Gastrocnemius medialis (tissue), 4 donors: ENCODE measurements at regions of chr4 and their contacts with region 1.

Region 1: DNA sequence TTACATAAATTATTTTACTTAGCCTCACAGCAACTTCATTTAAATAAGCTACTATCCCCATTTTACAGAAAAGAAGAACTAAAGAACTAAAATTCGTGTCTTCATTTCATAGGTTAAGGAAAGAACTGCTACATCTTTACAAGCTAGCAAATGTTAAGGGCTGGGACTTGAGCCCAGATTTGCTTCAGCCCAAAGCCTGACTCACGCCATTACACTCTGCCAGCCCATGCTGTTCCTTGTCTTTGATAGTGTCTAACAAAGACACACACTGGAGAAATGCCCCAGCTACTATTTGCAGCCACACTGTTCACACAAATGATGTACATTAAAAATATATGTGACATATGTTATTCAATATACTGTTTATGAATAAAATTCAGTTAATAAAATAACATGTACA is 29.0 kb upstream of the ERVMER34-1 start:
- DNase-seq: no peak
- ATAC-seq: no peak
- H3K4me3 ChIP-seq: no peak overlapping the region
- H3K27ac ChIP-seq: no peak overlapping the region
- H3K4me1 ChIP-seq: no peaks in the 10 kb centered on the region
- H3K27me3 ChIP-seq: no peaks in the 10 kb centered on the region
- CTCF ChIP-seq: no peak
- POLR2A ChIP-seq: no peak

Region 2: DNA sequence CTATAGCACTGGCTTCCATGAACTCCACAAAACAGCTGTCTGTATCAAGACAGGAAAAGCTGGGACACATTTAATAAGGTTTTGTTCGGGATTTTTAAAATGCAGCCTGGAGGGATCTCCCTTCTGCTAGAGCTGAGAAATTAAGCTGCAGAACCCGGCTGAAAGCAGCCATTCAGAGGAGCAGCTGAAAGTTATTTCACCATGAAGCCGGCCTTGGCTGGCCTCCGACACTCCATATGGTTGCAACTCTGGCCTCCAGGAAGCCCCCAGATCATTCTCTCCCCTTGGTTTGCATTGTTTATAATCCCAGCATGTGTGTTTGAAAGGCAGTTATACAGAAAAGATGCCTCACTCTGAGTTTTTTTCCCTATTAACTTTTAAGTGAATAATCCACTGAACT is 489.7 kb before region 1 on chr4:
- in situ Hi-C with region 1: no loop called
- intact Hi-C with region 1: no loop called
- DNase-seq: no peak
- ATAC-seq: no peak
- H3K4me3 ChIP-seq: no peak overlapping the region
- H3K27ac ChIP-seq: no peak overlapping the region
- H3K4me1 ChIP-seq: no peaks in the 10 kb centered on the region
- H3K27me3 ChIP-seq: no peaks in the 10 kb centered on the region
- CTCF ChIP-seq: no peak
- POLR2A ChIP-seq: no peak

Region 3: GRCh38 chr4:52743444-52744019 is 36.7 kb before region 1 on chr4:
- in situ Hi-C with region 1: no loop called
- intact Hi-C with region 1: no loop called
- DNase-seq: no peak
- ATAC-seq: no peak
- H3K4me3 ChIP-seq: no peak overlapping the region
- H3K27ac ChIP-seq: no peak overlapping the region
- H3K4me1 ChIP-seq: no peaks in the 10 kb centered on the region
- H3K27me3 ChIP-seq: no peaks in the 10 kb centered on the region
- CTCF ChIP-seq: no peak
- POLR2A ChIP-seq: no peak

Region 4: GRCh38 chr4:52837726-52838558 is 57.7 kb after region 1 on chr4:
- in situ Hi-C with region 1: loop called in 1 of 4 experiments (anchors 10 kb)
- intact Hi-C with region 1: no loop called
- DNase-seq: no peak
- ATAC-seq: no peak
- H3K4me3 ChIP-seq: no peak overlapping the region
- H3K27ac ChIP-seq: no peak overlapping the region
- H3K4me1 ChIP-seq: peaks cover 27 to 62% of the 10 kb centered on the region in 2 donors
- H3K27me3 ChIP-seq: no peaks in the 10 kb centered on the region
- CTCF ChIP-seq: no peak
- POLR2A ChIP-seq: no peak